ENCODE measurements at regions of chr16 and their contacts with region 1.

Region 1: GRCh38 chr16:58548378-58548777 is 33.1 kb downstream of the SETD6 start:
- DNase-seq: no peak
- ATAC-seq: no peak
- H3K4me3 ChIP-seq: no peak overlapping the region
- H3K4me3 Mint-ChIP-seq: no peak overlapping the region
- H3K27ac ChIP-seq: no peak overlapping the region
- H3K27ac Mint-ChIP-seq: no peak overlapping the region
- H3K4me1 ChIP-seq: no peaks in the 10 kb centered on the region
- H3K4me1 Mint-ChIP-seq: no peaks in the 10 kb centered on the region
- H3K27me3 ChIP-seq: no peaks in the 10 kb centered on the region
- H3K27me3 Mint-ChIP-seq: no peaks in the 10 kb centered on the region
- CTCF ChIP-seq: no peak

Region 2: GRCh38 chr16:58098207-58099096 is 449.9 kb before region 1 on chr16:
- CTCF ChIA-PET with region 1: no interaction called
- POLR2A ChIA-PET with region 1: no interaction called
- intact Hi-C with region 1: no loop called
- DNase-seq: no peak
- ATAC-seq: no peak
- H3K4me3 ChIP-seq: no peak overlapping the region
- H3K4me3 Mint-ChIP-seq: no peak overlapping the region
- H3K27ac ChIP-seq: no peak overlapping the region
- H3K27ac Mint-ChIP-seq: no peak overlapping the region
- H3K4me1 ChIP-seq: no peaks in the 10 kb centered on the region
- H3K4me1 Mint-ChIP-seq: no peaks in the 10 kb centered on the region
- H3K27me3 ChIP-seq: peaks cover 0 to 9% (median 2%) of the 10 kb centered on the region in 4 experiments
- H3K27me3 Mint-ChIP-seq: peaks cover 14% of the 10 kb centered on the region
- CTCF ChIP-seq: no peak

Region 3: GRCh38 chr16:58487566-58488351 is 60.6 kb before region 1 on chr16:
- CTCF ChIA-PET with region 1: no interaction called
- POLR2A ChIA-PET with region 1: no interaction called
- intact Hi-C with region 1: no loop called
- DNase-seq: peak; percentile 79
- ATAC-seq: peak; percentile 95
- H3K4me3 ChIP-seq: no peak overlapping the region
- H3K4me3 Mint-ChIP-seq: no peak overlapping the region
- H3K27ac ChIP-seq: no peak overlapping the region
- H3K27ac Mint-ChIP-seq: no peak overlapping the region
- H3K4me1 ChIP-seq: peaks cover 3 to 7% of the 10 kb centered on the region in 2 donors
- H3K4me1 Mint-ChIP-seq: peaks cover 3% of the 10 kb centered on the region
- H3K27me3 ChIP-seq: peaks cover 0 to 5% (median 0%) of the 10 kb centered on the region in 4 experiments
- H3K27me3 Mint-ChIP-seq: peaks cover 11% of the 10 kb centered on the region
- CTCF ChIP-seq: peak; percentile 92

Region 4: GRCh38 chr16:58582971-58583765 is 34.8 kb after region 1 on chr16:
- CTCF ChIA-PET with region 1: no interaction called
- POLR2A ChIA-PET with region 1: no interaction called
- intact Hi-C with region 1: loop called (anchors 5 kb)
- DNase-seq: no peak
- ATAC-seq: no peak
- H3K4me3 ChIP-seq: no peak overlapping the region
- H3K4me3 Mint-ChIP-seq: no peak overlapping the region
- H3K27ac ChIP-seq: no peak overlapping the region
- H3K27ac Mint-ChIP-seq: no peak overlapping the region
- H3K4me1 ChIP-seq: no peaks in the 10 kb centered on the region
- H3K4me1 Mint-ChIP-seq: no peaks in the 10 kb centered on the region
- H3K27me3 ChIP-seq: no peaks in the 10 kb centered on the region
- H3K27me3 Mint-ChIP-seq: no peaks in the 10 kb centered on the region
- CTCF ChIP-seq: no peak

Measured in B cell (primary cell).